HepG2 (cell line): ENCODE measurements at regions of chr6 and their contacts with region 1.

Region 1: GRCh38 chr6:107459283-107460082 is at the start of gene PDSS2:
- DNase-seq: peak; percentile 97
- ATAC-seq: peak; percentile 95
- H3K4me3 ChIP-seq: peak within 1 kb of the TSS; percentile 90 to 98 (median 92)
- H3K27ac ChIP-seq: peak within 1 kb of the TSS; percentile 93
- H3K4me1 ChIP-seq: peaks cover 57% of the 10 kb centered on the region
- H3K27me3 ChIP-seq: no peaks in the 10 kb centered on the region; a peak in 1 of 5 replicates
- CTCF ChIP-seq: peak; percentile 85
- EP300 ChIP-seq: peak in 1 of 2 experiments; percentile 51; a peak in 1 of 4 replicates
- POLR2A ChIP-seq: peak; percentile 93 to 99
- RAD21 ChIP-seq: peak; percentile 29; the same call in 1 of the 2 replicates
- total RNA-seq, gene PDSS2: 17.0 and 23.7 TPM in 2 replicates

Region 2: DNA sequence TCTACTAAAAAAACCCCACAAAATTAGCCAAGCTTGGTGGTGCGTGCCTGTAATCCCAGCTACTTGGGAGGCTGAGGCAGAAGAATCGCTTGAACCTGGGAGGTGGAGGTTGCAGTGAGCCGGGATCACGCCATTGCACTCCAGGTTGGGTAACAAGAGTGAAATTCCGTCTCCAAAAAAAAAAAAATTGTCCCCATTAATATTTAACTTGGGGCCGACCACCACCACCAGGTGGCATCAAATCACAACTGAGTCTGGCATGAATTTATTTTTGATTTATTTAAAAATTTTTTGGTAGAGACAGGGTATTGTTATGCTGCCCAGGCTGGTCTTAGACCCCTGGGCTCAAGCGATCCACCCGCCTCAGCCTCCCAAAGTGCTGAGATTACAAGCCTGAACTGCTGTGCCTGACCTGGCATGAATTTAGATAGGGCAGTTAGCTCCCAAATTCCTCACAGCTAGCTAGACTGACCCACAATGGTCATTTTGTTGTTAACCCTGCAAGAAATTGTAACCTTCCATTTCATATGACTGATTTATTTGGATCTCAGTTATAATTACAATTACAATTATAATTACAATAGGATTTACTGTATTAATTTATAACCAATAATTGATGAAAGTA is 327.0 kb before region 1 on chr6:
- CTCF ChIA-PET with region 1: no interaction called
- POLR2A ChIA-PET with region 1: no interaction called
- in situ Hi-C with region 1: no loop called
- intact Hi-C with region 1: no loop called
- DNase-seq: peak; percentile 46
- ATAC-seq: peak; percentile 56
- H3K4me3 ChIP-seq: no peak overlapping the region
- H3K27ac ChIP-seq: no peak overlapping the region
- H3K4me1 ChIP-seq: peaks cover 42% of the 10 kb centered on the region
- H3K27me3 ChIP-seq: no peaks in the 10 kb centered on the region
- CTCF ChIP-seq: peak; percentile 48
- EP300 ChIP-seq: no peak
- POLR2A ChIP-seq: no peak
- RAD21 ChIP-seq: peak; percentile 29; the same call in 1 of the 2 replicates

Region 3: DNA sequence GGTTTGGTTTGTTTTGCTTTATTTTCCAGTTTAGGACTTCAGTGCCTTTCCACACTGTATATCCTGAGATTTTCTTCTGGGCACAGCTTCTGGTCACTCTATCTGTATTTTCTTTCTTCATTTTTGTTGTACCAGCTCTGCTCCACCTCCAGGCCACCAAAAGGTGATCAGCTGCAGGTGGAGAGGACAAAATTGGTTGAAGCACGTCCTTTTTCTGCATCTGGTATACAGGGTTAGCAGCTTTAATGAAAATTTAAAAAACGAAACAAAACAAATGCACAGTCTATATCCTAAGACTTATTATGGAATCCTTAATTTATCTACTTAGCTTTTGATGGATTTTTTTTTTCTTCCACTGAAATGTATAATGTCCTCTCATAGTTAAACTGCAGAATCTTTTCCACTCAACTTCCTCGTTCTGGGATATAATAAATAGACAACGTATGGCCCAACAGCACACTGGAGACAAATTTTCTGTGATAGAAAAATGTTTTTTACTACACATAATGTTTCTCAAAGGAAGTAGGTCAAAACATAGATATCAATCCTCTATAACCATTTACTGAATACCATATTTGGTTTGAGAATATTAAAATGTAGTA is 19.7 kb after region 1 on chr6:
- CTCF ChIA-PET with region 1: no interaction called
- POLR2A ChIA-PET with region 1: interaction called, 10 read pairs
- in situ Hi-C with region 1: no loop called
- intact Hi-C with region 1: no loop called
- DNase-seq: no peak
- ATAC-seq: no peak
- H3K4me3 ChIP-seq: no peak overlapping the region
- H3K27ac ChIP-seq: no peak overlapping the region
- H3K4me1 ChIP-seq: peaks cover 11% of the 10 kb centered on the region; the same call in 1 of the 2 replicates
- H3K27me3 ChIP-seq: no peaks in the 10 kb centered on the region
- CTCF ChIP-seq: no peak
- EP300 ChIP-seq: no peak
- POLR2A ChIP-seq: no peak
- RAD21 ChIP-seq: no peak

Region 4: DNA sequence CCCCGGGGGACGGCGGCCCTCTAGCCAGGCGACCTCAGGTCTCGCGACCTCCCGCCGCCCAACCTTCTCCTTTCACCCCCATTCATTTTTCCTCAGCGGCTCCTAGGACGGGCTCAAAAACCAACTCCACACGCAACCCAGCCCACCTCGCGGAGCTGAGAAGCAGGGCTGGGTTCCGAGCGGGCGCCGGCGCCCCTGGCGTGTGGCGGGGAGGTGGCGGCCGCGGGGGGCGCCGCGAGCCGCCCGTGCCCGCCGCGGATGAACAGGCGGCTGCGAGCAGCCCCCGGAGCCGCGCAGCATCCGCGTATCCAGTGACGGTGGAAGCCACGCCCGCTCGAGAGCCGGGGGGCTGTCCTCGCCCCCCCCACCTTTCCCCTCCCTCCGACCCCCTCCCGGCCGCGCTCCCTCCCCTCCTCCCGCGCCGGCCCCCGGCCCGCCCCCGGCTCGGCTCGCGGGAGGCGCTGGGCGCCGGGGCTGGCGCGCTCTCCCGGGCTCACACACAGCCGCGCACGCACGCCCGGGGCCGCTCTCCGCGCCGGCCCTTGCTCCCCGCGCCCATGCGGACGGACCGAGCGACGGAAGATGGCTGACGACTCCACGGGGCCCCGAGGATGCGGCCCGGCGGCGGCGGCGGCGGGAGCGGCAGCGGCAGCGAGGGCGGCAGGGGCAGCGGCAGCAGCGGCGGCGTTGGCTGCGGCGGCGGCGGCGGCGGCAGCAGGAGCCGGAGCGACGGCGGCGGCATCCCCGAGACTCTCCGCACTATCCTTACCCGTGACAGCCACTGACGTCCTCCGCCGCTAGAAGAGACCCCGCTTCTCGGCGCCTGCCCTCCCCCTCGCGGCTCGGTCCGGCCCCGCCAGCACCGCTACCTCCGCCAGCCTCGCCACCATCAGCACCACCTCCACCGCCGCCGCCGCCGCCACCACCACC is 30.4 kb after region 1 on chr6 and contains the start of gene SOBP:
- CTCF ChIA-PET with region 1: no interaction called
- POLR2A ChIA-PET with region 1: interaction called, 50 read pairs
- in situ Hi-C with region 1: no loop called
- intact Hi-C with region 1: loop called (anchors 1 kb)
- DNase-seq: peak; percentile 44
- ATAC-seq: peak; percentile 36
- H3K4me3 ChIP-seq: peak within 1 kb of the TSS; percentile 94 to 98 (median 96)
- H3K27ac ChIP-seq: peak within 1 kb of the TSS; percentile 76
- H3K4me1 ChIP-seq: peaks cover 35% of the 10 kb centered on the region
- H3K27me3 ChIP-seq: no peaks in the 10 kb centered on the region; a peak in 2 of 5 replicates
- CTCF ChIP-seq: no peak
- EP300 ChIP-seq: no peak
- POLR2A ChIP-seq: peak in 1 of 2 experiments; percentile 60; a peak in 2 of 4 replicates
- RAD21 ChIP-seq: 0 out of 2 replicates have a peak, but pooled peaks have one; percentile 32
- total RNA-seq, gene SOBP: 5.0 and 6.9 TPM in 2 replicates

Region 5: GRCh38 chr6:107523054-107523791 is 63.7 kb after region 1 on chr6:
- CTCF ChIA-PET with region 1: no interaction called
- POLR2A ChIA-PET with region 1: no interaction called
- in situ Hi-C with region 1: no loop called
- intact Hi-C with region 1: no loop called
- DNase-seq: no peak
- ATAC-seq: no peak
- H3K4me3 ChIP-seq: no peak overlapping the region
- H3K27ac ChIP-seq: no peak overlapping the region
- H3K4me1 ChIP-seq: no peaks in the 10 kb centered on the region
- H3K27me3 ChIP-seq: no peaks in the 10 kb centered on the region
- CTCF ChIP-seq: no peak
- EP300 ChIP-seq: no peak
- POLR2A ChIP-seq: no peak
- RAD21 ChIP-seq: no peak